Adrenal gland (tissue), 19 donors: ENCODE measurements at regions of chr1 and their contacts with region 1.

Region 1: GRCh38 chr1:180252638-180253536 is 22.8 kb downstream of the LHX4 start:
- DNase-seq: peak; percentile 70 to 86 (median 77)
- H3K4me3 ChIP-seq: no peak overlapping the region
- H3K27ac ChIP-seq: no peak overlapping the region
- H3K4me1 ChIP-seq: no peaks in the 10 kb centered on the region
- H3K27me3 ChIP-seq: no peaks in the 10 kb centered on the region
- CTCF ChIP-seq: peak; percentile 67 to 94 (median 86)
- POLR2A ChIP-seq: no peak

Region 2: DNA sequence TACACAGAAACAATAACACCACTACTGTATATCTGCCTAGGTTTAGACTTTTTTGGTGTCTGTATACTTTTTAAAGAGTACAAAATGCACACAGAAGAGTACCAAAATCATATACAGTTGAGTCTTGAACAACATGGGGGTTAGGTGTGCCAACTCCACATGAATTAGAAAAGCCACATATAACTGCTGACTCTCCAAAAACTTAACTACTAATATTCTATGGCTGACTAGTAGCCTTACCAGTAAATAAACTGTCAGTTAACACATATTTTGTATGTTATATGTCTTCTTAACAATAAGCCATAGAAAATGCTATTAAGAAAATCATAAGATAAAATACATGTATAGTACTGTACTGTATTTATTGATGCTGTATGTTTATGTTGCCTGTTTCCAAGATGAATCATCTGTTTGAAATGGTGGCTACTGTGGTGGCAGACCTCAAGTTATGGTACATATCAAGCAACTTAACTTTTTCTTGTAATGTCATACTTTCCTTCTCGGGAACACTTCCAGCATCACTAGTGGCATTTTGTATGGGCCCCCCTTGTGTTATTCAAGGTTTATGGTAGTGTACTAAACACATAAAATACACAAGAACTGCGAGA is 48.4 kb after region 1 on chr1:
- intact Hi-C with region 1: no loop called
- DNase-seq: no peak
- H3K4me3 ChIP-seq: no peak overlapping the region
- H3K27ac ChIP-seq: no peak overlapping the region
- H3K4me1 ChIP-seq: no peaks in the 10 kb centered on the region
- H3K27me3 ChIP-seq: no peaks in the 10 kb centered on the region
- CTCF ChIP-seq: no peak
- POLR2A ChIP-seq: no peak

Region 3: GRCh38 chr1:180415985-180416633 is 163.2 kb after region 1 on chr1:
- intact Hi-C with region 1: loop called (anchors 5 kb)
- DNase-seq: no peak
- H3K4me3 ChIP-seq: no peak overlapping the region
- H3K27ac ChIP-seq: no peak overlapping the region
- H3K4me1 ChIP-seq: no peaks in the 10 kb centered on the region
- H3K27me3 ChIP-seq: no peaks in the 10 kb centered on the region
- CTCF ChIP-seq: peak; percentile 44 to 75 (median 61)
- POLR2A ChIP-seq: no peak

Region 4: GRCh38 chr1:180470031-180470430 is 217.1 kb after region 1 on chr1:
- intact Hi-C with region 1: loop called in 1 of 2 experiments (anchors 10 kb)
- DNase-seq: no peak
- H3K4me3 ChIP-seq: no peak overlapping the region
- H3K27ac ChIP-seq: no peak overlapping the region
- H3K4me1 ChIP-seq: no peaks in the 10 kb centered on the region
- H3K27me3 ChIP-seq: no peaks in the 10 kb centered on the region
- CTCF ChIP-seq: no peak
- POLR2A ChIP-seq: no peak

Region 5: DNA sequence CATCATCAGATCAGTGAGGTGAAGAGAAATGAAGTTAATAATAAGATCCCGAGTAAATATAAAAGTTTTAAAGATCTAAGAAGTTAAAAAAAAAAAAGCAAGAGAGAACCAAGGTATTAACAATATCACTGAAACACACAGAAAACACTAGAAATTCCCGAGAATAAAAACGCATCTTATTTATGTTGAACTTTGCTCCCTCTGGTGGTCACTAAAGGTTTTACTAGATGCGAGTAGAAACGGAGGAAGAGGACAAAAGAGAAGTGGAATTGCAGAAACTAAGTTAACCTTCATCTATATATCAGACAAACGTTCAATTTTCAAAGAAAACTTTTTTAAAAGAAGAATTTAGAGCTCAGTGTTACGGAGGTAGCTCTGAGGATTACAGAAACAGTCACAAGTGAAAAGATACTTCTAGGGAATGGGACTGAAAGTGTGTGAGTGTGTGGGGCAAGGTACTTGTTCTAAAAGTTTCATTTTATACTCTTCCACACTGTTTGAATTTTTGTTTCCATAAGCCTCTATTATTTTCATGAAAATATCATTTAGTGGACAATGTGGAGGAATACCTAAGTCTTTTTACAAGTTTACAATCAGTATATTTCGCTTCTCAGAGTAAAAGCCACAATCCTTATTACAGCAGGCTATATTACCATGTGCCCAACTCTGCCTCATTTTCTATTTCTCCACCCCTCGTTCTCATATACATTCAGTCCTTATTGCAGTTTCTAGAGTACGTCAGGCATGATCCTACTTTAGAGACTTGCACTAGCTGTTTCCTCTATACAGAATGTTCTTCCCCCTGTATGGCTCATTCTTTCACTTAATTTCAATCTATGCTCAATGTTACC is 229.8 kb after region 1 on chr1:
- intact Hi-C with region 1: loop called (anchors 2 to 10 kb)
- DNase-seq: peak in 1 of 7 donors; percentile 34
- H3K4me3 ChIP-seq: peak overlapping the region in 1 of 4 donors; percentile 10
- H3K27ac ChIP-seq: no peak overlapping the region
- H3K4me1 ChIP-seq: peaks cover 0 to 7% of the 10 kb centered on the region in 2 donors
- H3K27me3 ChIP-seq: no peaks in the 10 kb centered on the region
- CTCF ChIP-seq: peak; percentile 45 to 75 (median 68)
- POLR2A ChIP-seq: no peak